ENCODE measurements at regions of chr9 and their contacts with region 1.

Region 1: GRCh38 chr9:136283291-136284235 is 20.3 kb downstream of the CCDC187 start:
- DNase-seq: peak; percentile 86
- ATAC-seq: peak; percentile 98

Region 2: GRCh38 chr9:135602789-135603481 is 680.6 kb before region 1 on chr9:
- intact Hi-C with region 1: loop called (anchors 5 kb)
- DNase-seq: no peak
- ATAC-seq: peak; percentile 48

Region 3: GRCh38 chr9:135961277-135961705 is 322.3 kb before region 1 on chr9 and contains the start of gene UBAC1:
- intact Hi-C with region 1: loop called (anchors 10 kb)
- DNase-seq: peak; percentile 99
- ATAC-seq: peak; percentile 91
- total RNA-seq, gene UBAC1: 107 TPM

Region 4: DNA sequence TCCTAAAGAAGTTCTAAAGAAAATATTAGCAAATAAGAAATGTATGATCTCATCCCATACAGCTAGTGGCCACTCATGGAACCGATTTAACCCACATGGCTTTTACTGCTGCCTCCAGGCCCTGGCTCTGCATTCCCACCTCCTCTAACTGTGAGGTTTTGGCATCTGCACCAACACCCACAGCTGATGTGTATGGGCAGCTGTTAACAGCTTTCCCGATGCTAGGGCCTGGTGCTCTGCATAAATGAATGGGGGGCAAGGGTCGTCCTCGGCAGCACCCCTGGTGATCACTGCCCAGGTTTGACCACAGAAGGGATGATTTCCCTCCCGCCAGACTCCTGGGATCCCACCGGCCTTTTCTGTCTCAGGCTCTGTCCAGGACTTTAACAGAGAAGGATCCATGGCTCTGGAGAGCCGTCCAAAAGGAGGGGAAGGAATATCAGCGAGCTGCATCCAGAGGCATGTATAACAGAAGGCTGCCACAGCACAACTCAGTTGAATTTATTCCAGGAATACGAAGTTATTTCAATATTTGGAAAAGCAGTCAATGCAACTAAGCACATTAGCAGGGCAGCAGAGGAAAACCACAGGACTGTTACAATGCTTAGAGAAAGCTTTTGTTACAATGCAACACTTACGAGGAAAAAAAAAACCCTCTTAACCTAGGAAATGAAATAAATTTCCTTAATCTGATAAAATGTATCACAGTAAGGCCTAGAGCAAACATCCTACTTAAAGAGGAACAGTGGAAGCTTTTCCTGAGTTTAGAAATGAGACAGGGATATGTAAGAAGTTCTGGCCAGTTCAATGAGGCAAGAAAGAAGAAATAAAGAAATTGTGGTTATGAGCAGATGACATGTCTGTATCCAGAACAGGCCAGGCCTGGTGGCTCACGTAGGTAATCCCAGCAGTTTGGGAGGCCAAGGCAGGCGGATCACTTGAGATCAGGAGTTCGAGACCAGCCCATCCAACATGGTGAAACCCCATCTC is 251.5 kb before region 1 on chr9:
- intact Hi-C with region 1: no loop called
- DNase-seq: no peak
- ATAC-seq: no peak

Region 5: DNA sequence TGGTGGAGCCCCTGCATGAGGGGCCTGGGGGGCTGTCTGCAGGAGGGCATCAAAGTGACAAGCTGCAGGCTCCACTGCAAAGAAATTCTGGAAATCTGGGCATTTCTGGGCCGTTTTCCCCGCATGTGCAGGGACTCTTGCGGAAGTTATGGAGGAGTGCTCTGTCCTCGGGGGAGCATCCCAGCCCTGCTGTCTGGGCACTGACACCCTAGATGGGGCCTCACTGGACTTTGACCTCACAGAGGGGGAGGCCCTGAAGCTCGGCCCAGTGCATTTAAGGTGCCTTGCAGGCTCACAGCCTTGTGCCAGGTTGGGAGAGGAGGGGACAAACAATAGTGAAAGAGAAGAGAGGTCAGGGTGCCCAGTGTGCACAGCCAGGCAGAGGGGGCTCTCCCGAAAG is 114.1 kb before region 1 on chr9:
- intact Hi-C with region 1: loop called (anchors 2 kb)
- DNase-seq: peak; percentile 13
- ATAC-seq: no peak

Region 6: GRCh38 chr9:136245219-136246150 is 38.1 kb before region 1 on chr9 and contains the start of gene QSOX2:
- intact Hi-C with region 1: no loop called
- DNase-seq: peak; percentile 90
- ATAC-seq: peak; percentile 94
- total RNA-seq, gene QSOX2: 7.7 TPM